ENCODE measurements at regions of chr17 and their contacts with region 1.

Region 1: GRCh38 chr17:1673041-1673785 is 11.5 kb downstream of the PRPF8 start:
- H3K4me3 ChIP-seq: no peak overlapping the region
- H3K27ac ChIP-seq: no peak overlapping the region
- H3K4me1 ChIP-seq: no peaks in the 10 kb centered on the region
- CTCF ChIP-seq: no peak

Region 2: DNA sequence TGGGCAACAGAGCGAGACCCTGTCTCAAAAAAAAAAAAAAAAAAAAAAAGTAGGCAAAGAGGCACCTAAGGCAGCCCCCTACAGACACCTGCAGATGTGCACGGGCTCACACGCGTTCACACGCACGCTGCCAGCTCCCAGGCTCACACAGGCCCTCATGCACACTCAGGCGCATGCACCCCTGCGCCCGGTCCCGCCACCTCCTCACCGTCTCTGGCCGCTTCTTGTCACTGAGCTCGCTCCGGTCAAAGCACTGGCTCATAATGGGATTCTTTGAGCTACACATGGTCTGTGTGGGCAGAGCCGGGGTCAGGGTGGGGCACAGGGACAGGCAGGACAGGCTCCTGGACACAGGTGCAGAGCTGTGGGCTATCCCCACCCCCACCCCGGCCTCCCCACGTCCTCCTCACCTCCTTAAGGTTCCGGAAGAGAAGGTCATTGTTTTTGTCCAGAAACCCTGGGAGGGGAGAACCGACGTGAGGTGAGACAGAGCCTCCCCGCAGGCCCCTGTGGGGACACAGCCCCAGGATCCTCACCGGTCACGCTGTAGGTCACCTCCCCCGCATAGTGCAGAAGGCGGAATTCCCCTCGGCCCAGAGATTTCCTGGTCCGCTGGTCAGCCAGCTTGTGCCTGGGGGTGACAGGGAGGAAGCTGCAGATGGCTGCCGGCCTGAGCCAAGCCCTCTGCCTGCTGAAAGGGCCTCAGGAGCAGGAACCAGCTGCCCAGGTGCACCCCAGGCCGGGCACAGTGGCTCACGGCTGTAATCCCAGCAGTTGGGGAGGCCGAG is 198.6 kb before region 1 on chr17:
- CTCF ChIA-PET with region 1: no interaction called
- POLR2A ChIA-PET with region 1: no interaction called
- H3K4me3 ChIP-seq: no peak overlapping the region
- H3K27ac ChIP-seq: no peak overlapping the region
- H3K4me1 ChIP-seq: no peaks in the 10 kb centered on the region
- CTCF ChIP-seq: no peak

Region 3: GRCh38 chr17:1638171-1638952 is 34.9 kb before region 1 on chr17:
- CTCF ChIA-PET with region 1: no interaction called
- POLR2A ChIA-PET with region 1: no interaction called
- H3K4me3 ChIP-seq: no peak overlapping the region
- H3K27ac ChIP-seq: no peak overlapping the region
- H3K4me1 ChIP-seq: no peaks in the 10 kb centered on the region
- CTCF ChIP-seq: no peak

Region 4: GRCh38 chr17:1648963-1649843 is 24.0 kb before region 1 on chr17:
- CTCF ChIA-PET with region 1: interaction called, 31 read pairs
- POLR2A ChIA-PET with region 1: interaction called, 38 read pairs
- H3K4me3 ChIP-seq: peak overlapping the region; percentile 61
- H3K27ac ChIP-seq: peak overlapping the region; percentile 86
- H3K4me1 ChIP-seq: peaks cover 8% of the 10 kb centered on the region
- CTCF ChIP-seq: peak; percentile 23

Region 5: GRCh38 chr17:1658100-1658499 is 15.1 kb before region 1 on chr17:
- CTCF ChIA-PET with region 1: interaction called, 28 read pairs
- POLR2A ChIA-PET with region 1: interaction called, 38 read pairs
- H3K4me3 ChIP-seq: no peak overlapping the region
- H3K27ac ChIP-seq: no peak overlapping the region
- H3K4me1 ChIP-seq: no peaks in the 10 kb centered on the region
- CTCF ChIP-seq: no peak

Region 6: DNA sequence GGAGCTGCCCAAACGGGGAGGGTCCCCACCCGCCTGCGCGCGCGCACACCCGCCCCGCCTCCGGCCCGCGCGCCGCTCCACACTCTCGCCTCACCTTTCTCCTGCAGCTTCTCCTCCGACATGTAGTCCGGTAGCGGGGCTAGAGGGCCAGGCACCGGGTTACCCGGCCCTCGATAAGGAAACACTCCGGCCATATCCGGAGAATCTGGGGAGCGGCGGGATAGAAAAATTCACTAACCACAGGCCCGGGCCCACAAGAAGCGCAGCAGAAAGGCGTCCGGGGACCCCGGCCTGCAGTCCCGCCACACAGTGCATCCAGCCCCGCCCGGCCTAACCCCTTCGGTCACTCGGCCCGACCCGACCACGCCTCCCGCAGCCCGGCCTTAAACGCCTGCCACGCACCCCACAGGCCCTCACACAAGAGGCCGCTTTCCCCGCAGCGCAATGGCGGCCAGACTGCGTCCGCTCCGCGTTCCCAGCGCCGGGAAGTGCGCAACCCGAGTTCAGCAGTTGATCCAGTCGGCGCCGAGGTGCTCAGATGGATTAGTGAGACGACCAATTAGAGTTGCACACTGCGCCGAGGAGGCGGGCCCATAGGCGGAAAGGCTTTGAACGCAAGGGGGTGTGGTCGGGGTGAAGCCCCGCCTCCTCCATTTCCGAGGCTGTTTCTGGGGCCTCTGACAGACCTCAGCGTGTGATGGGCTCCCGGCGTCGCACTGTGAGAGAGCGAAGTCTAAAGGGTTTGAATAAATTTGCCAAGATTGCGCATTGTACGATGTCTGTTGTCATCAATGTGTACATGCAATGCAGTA is 11.4 kb after region 1 on chr17 and contains the start of gene PRPF8:
- CTCF ChIA-PET with region 1: interaction called, 66 read pairs
- POLR2A ChIA-PET with region 1: interaction called, 7 read pairs
- H3K4me3 ChIP-seq: peak within 1 kb of the TSS; percentile 99
- H3K27ac ChIP-seq: peak within 1 kb of the TSS; percentile 94
- H3K4me1 ChIP-seq: peaks cover 10% of the 10 kb centered on the region; the same call in 1 of the 2 replicates
- CTCF ChIP-seq: no peak

Region 7: DNA sequence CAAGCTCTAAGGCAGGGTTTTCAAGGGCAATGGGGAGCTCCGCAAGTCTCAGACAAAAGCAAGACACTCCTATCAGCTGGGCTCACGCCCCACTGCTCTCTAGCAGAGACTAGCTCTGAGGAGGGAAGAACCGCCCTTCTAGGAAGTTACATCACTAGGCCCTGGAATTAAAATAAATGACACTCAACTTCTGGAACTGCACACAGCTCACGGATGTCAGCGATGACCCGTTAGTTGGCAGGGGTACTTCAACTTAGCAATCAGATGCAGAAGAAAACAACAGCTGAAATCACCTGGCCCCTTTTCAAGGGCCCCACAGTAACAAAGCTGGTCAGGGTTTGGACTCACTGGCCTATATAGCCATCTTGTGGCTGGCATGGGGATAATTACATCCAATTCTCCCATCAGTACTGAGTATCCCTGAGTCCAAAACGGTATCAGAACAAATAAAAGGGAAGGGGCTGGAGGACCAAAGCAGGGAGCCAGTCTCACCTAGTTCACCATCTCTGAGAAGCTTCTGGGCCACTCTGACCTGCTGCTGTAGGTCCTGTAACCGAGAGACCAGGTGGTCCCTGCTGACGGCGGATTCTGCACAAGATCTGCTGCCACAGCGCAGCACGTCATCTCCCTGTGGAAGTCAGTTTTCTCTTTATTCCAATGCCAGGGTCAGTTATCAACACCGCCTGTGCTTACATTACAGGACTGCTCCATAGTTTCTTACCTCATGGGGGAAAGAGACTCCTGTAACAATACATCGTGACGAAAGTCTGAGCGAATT is 110.8 kb after region 1 on chr17:
- CTCF ChIA-PET with region 1: interaction called, 12 read pairs
- POLR2A ChIA-PET with region 1: no interaction called
- H3K4me3 ChIP-seq: no peak overlapping the region
- H3K27ac ChIP-seq: no peak overlapping the region
- H3K4me1 ChIP-seq: peaks cover 11% of the 10 kb centered on the region
- CTCF ChIP-seq: peak; percentile 62; the same call in 1 of the 2 replicates

Measured in HEK293 (cell line).